ENCODE measurements at regions of chr5 and their contacts with region 1.

Region 1: GRCh38 chr5:95670568-95670967 is 12.2 kb downstream of the SPATA9 start:
- DNase-seq: no peak
- ATAC-seq: no peak
- H3K4me3 ChIP-seq: no peak overlapping the region
- H3K27ac ChIP-seq: no peak overlapping the region
- H3K4me1 ChIP-seq: no peaks in the 10 kb centered on the region
- H3K27me3 ChIP-seq: no peaks in the 10 kb centered on the region
- CTCF ChIP-seq: no peak

Region 2: DNA sequence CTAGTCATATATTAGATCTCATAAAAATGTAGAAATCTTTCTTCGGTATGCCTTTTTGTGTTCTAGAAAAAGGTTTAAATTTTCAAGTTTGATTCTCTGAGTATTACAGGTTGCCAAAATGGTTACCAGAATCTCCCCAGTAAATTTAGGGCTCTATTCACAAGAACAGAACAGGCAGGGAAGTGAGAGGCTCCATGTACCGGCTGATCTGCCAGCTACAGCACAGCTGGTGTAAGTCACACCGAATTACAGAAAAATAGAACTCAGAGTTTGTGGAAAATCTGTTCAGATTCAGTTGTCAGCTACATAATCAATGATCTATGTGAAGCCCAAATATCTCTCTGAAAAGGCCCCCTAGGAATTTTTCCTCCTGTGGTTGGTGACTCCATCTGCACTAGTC is 268.9 kb before region 1 on chr5:
- CTCF ChIA-PET with region 1: no interaction called
- POLR2A ChIA-PET with region 1: no interaction called
- in situ Hi-C with region 1: no loop called
- intact Hi-C with region 1: no loop called
- DNase-seq: no peak
- ATAC-seq: no peak
- H3K4me3 ChIP-seq: no peak overlapping the region
- H3K27ac ChIP-seq: no peak overlapping the region
- H3K4me1 ChIP-seq: no peaks in the 10 kb centered on the region
- H3K27me3 ChIP-seq: peaks cover 2% of the 10 kb centered on the region
- CTCF ChIP-seq: no peak

Region 3: DNA sequence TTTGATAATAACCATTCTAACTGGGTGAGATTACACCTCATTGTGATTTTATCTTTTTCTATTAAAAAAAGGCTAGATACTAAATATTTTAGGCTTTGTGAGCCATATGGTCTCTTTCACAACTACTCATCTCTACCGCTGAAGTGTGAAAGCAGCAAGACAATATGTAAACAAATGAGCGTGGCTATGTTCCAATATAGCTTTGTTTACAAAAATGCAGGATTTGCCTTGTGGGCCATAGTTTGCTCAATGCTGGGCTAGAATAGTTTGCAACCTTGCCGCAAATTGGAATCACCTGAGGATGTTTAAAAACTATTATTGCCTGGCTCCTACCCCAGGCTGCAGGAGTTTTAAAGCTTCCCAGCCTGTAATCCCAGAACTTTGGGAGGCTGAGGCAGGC is 60.9 kb before region 1 on chr5:
- CTCF ChIA-PET with region 1: interaction called, 11 read pairs
- POLR2A ChIA-PET with region 1: no interaction called
- in situ Hi-C with region 1: no loop called
- intact Hi-C with region 1: no loop called
- DNase-seq: no peak
- ATAC-seq: no peak
- H3K4me3 ChIP-seq: no peak overlapping the region
- H3K27ac ChIP-seq: no peak overlapping the region
- H3K4me1 ChIP-seq: no peaks in the 10 kb centered on the region
- H3K27me3 ChIP-seq: no peaks in the 10 kb centered on the region
- CTCF ChIP-seq: no peak

Region 4: GRCh38 chr5:95631255-95631958 is 39.2 kb before region 1 on chr5:
- CTCF ChIA-PET with region 1: no interaction called
- POLR2A ChIA-PET with region 1: no interaction called
- in situ Hi-C with region 1: no loop called
- intact Hi-C with region 1: no loop called
- DNase-seq: no peak
- ATAC-seq: no peak
- H3K4me3 ChIP-seq: no peak overlapping the region
- H3K27ac ChIP-seq: no peak overlapping the region
- H3K4me1 ChIP-seq: 0 out of 2 replicates have a peak, but pooled peaks cover 4% of the 10 kb centered on the region
- H3K27me3 ChIP-seq: no peaks in the 10 kb centered on the region
- CTCF ChIP-seq: no peak